ENCODE measurements at regions of chr10 and their contacts with region 1.

Region 1: DNA sequence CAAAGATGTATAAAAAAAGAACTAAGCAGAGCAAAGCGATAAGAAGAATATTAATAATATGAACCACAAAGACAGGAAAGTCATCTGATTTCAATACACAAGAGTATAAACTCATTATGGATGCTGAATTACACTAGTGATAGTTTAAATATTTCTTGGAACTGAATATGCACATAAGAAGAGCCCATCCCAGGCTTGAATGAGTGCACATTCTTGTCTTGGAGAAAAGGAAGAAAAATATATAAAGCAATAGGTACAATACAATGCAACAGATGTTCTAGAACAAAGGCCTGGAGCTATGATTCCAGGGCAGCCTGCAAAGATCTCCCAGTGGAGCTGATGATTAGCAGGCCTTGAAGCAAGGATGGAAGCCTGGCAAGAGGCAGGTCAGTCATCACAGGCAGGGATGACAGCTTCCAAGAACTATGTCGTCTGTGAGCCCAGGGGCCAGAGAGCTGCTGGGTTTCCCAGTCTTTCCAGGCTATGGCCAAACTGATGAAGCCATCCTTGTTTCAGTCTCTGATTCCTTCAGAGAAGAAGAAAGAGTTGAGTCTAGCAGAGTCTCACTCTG is 277.6 kb downstream of the KCNMA1 start:
- DNase-seq: no peak
- H3K4me3 ChIP-seq: no peak overlapping the region
- H3K27ac ChIP-seq: peak overlapping the region in 1 of 4 donors; percentile 21
- H3K4me1 ChIP-seq: no peaks in the 10 kb centered on the region
- H3K27me3 ChIP-seq: no peaks in the 10 kb centered on the region
- CTCF ChIP-seq: no peak
- EP300 ChIP-seq: no peak
- POLR2A ChIP-seq: no peak

Region 2: GRCh38 chr10:76375761-76376160 is 984.3 kb before region 1 on chr10:
- in situ Hi-C with region 1: no loop called
- intact Hi-C with region 1: no loop called
- DNase-seq: no peak
- H3K4me3 ChIP-seq: no peak overlapping the region
- H3K27ac ChIP-seq: no peak overlapping the region
- H3K4me1 ChIP-seq: no peaks in the 10 kb centered on the region
- H3K27me3 ChIP-seq: no peaks in the 10 kb centered on the region
- CTCF ChIP-seq: no peak
- EP300 ChIP-seq: no peak
- POLR2A ChIP-seq: no peak

Region 3: DNA sequence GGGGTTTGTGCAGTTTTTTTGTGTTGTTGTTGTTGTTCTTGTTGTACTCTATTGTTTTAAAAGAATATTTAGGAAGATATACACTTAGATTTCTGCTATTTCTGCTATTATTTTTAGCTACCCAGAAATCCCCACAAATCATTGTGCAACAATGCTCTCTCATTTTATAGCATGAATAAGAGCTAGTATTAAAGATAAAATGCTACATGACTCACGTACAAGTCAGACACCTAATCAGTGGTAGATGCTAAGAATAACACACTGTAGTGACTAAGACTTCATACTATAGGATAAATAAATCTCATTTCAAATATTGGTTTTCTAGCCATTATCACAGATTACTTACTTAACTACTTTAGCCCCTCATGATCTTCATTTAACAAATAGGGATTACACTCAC is 642.9 kb before region 1 on chr10:
- in situ Hi-C with region 1: no loop called
- intact Hi-C with region 1: loop called (anchors 10 kb)
- DNase-seq: no peak
- H3K4me3 ChIP-seq: no peak overlapping the region
- H3K27ac ChIP-seq: no peak overlapping the region
- H3K4me1 ChIP-seq: no peaks in the 10 kb centered on the region
- H3K27me3 ChIP-seq: no peaks in the 10 kb centered on the region
- CTCF ChIP-seq: no peak
- EP300 ChIP-seq: no peak
- POLR2A ChIP-seq: no peak

Region 4: DNA sequence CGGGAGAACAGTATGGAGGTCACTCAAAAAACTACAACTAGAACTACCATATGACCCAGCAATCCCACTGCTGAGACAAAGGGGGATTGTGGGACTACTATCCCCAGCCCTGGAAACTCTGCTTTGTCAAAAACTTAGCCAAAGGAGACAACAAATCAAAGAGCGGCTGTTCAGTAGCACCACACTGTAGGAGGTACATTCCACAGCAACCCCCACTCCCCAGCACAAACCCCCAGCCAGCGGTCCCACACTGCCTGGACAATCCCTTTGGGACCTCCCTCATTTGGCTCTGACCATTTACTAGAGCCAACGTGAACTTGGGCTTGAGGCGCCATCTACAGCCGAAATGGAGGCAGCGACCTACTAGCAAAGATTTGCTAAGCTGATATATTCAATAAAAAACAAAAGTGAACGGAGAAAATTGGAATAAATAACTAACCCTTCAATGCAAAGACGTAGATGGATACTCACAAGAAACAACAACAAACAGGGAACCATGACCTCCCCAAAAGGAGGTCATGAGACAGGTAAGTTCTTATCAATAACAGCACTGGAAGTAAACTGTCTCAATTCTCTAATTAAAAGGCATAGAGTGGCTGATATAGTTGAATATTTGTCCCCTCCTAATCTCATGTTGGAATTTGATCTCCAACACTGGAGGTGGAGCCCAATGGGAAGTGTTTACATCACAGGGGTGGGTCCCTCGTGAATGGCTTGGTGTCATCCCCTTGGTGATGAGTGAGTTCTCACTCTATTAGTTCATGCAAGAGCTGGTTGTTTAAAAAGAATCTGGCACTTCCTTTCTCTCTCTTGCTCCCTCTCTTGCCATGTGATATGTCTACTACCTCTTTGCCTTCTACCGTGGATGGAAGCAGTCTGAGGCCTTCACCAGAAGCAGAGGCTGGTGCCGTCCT is 396.5 kb after region 1 on chr10:
- in situ Hi-C with region 1: no loop called
- intact Hi-C with region 1: no loop called
- DNase-seq: peak; percentile 24
- H3K4me3 ChIP-seq: no peak overlapping the region
- H3K27ac ChIP-seq: no peak overlapping the region
- H3K4me1 ChIP-seq: no peaks in the 10 kb centered on the region
- H3K27me3 ChIP-seq: no peaks in the 10 kb centered on the region
- CTCF ChIP-seq: peak in 4 of 5 experiments; percentile 34 to 47 (median 41)
- EP300 ChIP-seq: no peak
- POLR2A ChIP-seq: no peak